Ovary (tissue), 10 donors: ENCODE measurements at regions of chr4 and their contacts with region 1.

Region 1: GRCh38 chr4:123564758-123565346 is 168.3 kb downstream of the SPRY1 start:
- DNase-seq: peak in 3 of 5 donors; percentile 34 to 48 (median 35)
- H3K4me3 ChIP-seq: no peak overlapping the region
- H3K27ac ChIP-seq: no peak overlapping the region
- H3K4me1 ChIP-seq: peaks cover 10% of the 10 kb centered on the region
- H3K27me3 ChIP-seq: no peaks in the 10 kb centered on the region
- CTCF ChIP-seq: peak in 2 of 3 donors; percentile 67 to 75
- EP300 ChIP-seq: no peak
- POLR2A ChIP-seq: no peak

Region 2: DNA sequence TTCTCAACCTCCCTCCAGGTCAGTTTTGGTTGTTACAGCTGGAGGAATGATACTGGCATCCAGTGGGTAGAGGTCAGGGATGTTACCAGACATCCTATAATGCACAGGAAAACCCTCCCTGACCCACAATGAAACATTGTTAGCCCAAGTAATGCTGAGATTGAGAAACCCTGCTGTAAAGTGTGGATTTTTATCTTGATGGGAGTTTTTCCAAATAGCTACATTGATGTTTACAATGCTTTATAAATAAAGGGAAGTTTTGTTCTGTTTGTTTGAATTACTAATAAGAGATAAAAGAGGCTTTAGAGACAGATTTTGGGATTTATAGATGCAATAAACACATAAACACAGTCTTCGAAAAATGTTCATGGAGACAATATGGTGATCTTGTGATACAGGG is 448.4 kb before region 1 on chr4:
- intact Hi-C with region 1: loop called in 1 of 4 experiments (anchors 10 kb)
- DNase-seq: no peak
- H3K4me3 ChIP-seq: no peak overlapping the region
- H3K27ac ChIP-seq: no peak overlapping the region
- H3K4me1 ChIP-seq: no peaks in the 10 kb centered on the region
- H3K27me3 ChIP-seq: no peaks in the 10 kb centered on the region
- CTCF ChIP-seq: no peak
- EP300 ChIP-seq: no peak
- POLR2A ChIP-seq: no peak

Region 3: GRCh38 chr4:123412091-123412505 is 152.8 kb before region 1 on chr4:
- intact Hi-C with region 1: no loop called
- DNase-seq: no peak
- H3K4me3 ChIP-seq: no peak overlapping the region
- H3K27ac ChIP-seq: no peak overlapping the region
- H3K4me1 ChIP-seq: no peaks in the 10 kb centered on the region
- H3K27me3 ChIP-seq: no peaks in the 10 kb centered on the region
- CTCF ChIP-seq: no peak
- EP300 ChIP-seq: no peak
- POLR2A ChIP-seq: no peak

Region 4: DNA sequence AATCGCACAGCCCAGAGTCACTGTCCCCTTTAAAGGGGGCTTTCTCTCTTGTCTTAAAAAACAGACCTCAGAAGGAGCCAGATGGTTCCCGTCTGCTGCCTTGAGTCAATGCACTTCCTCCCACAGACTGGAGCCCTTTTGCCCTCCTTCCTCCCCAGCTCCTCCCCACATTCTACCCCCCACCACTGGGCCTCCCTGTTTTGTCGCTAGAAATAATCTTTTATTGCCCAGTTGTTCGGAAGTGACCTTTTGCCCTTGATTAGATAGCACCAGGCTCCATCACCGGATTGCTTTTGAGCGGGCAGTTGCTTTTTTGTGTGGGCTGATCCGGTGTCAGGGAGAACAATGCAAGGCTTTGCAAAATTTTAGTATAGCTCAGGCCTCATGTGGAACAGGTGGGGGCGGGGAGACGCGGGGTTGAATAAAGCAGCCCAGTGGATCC is 120.5 kb before region 1 on chr4:
- intact Hi-C with region 1: no loop called
- DNase-seq: peak in 4 of 5 donors; percentile 28 to 49 (median 36)
- H3K4me3 ChIP-seq: no peak overlapping the region
- H3K27ac ChIP-seq: no peak overlapping the region
- H3K4me1 ChIP-seq: peaks cover 3% of the 10 kb centered on the region
- H3K27me3 ChIP-seq: no peaks in the 10 kb centered on the region
- CTCF ChIP-seq: no peak
- EP300 ChIP-seq: no peak
- POLR2A ChIP-seq: no peak

Region 5: DNA sequence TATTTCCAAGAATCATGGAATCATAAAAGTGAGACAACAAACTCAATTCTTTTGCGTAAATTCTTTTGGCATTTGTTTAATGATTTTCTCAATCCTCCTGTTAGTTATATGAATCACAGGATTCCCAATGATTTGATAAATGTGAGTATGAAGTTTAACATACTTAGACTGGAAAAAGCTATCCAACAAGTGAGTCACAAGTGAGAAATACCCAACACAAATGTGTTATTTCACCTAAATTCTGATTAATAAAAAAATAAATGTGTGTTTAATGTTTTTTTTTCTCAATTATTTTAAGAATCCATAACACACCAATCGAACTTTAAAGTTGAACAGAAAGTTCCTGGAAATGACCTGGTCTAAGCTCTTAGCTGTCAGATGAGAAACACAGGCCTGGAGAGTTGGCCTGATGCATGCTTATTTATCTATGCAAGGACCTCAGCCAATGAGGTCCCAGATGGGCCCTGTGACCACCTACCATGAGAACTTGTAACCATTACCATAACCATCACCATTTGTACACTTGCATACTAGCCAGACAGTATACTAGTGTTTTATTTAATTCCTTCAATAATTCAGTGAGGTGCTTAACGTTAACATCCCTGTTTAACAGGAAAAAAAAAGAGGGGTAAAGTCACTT is 218.4 kb after region 1 on chr4:
- intact Hi-C with region 1: loop called in 1 of 4 experiments (anchors 5 kb)
- DNase-seq: no peak
- H3K4me3 ChIP-seq: no peak overlapping the region
- H3K27ac ChIP-seq: no peak overlapping the region
- H3K4me1 ChIP-seq: peaks cover 13% of the 10 kb centered on the region
- H3K27me3 ChIP-seq: no peaks in the 10 kb centered on the region
- CTCF ChIP-seq: no peak
- EP300 ChIP-seq: no peak
- POLR2A ChIP-seq: no peak

Region 6: GRCh38 chr4:123922847-123923246 is 358.0 kb after region 1 on chr4:
- intact Hi-C with region 1: no loop called
- DNase-seq: no peak
- H3K4me3 ChIP-seq: no peak overlapping the region
- H3K27ac ChIP-seq: no peak overlapping the region
- H3K4me1 ChIP-seq: no peaks in the 10 kb centered on the region
- H3K27me3 ChIP-seq: no peaks in the 10 kb centered on the region
- CTCF ChIP-seq: no peak
- EP300 ChIP-seq: no peak
- POLR2A ChIP-seq: no peak